ENCODE measurements at regions of chr2 and their contacts with region 1.

Region 1: GRCh38 chr2:218849721-218850120 is 9.9 kb upstream of the WNT6 start:
- DNase-seq: peak in 1 of 2 donors; percentile 41
- H3K4me3 ChIP-seq: no peak overlapping the region
- H3K27ac ChIP-seq: no peak overlapping the region
- H3K4me1 ChIP-seq: no peaks in the 10 kb centered on the region
- H3K27me3 ChIP-seq: no peaks in the 10 kb centered on the region
- CTCF ChIP-seq: no peak

Region 2: DNA sequence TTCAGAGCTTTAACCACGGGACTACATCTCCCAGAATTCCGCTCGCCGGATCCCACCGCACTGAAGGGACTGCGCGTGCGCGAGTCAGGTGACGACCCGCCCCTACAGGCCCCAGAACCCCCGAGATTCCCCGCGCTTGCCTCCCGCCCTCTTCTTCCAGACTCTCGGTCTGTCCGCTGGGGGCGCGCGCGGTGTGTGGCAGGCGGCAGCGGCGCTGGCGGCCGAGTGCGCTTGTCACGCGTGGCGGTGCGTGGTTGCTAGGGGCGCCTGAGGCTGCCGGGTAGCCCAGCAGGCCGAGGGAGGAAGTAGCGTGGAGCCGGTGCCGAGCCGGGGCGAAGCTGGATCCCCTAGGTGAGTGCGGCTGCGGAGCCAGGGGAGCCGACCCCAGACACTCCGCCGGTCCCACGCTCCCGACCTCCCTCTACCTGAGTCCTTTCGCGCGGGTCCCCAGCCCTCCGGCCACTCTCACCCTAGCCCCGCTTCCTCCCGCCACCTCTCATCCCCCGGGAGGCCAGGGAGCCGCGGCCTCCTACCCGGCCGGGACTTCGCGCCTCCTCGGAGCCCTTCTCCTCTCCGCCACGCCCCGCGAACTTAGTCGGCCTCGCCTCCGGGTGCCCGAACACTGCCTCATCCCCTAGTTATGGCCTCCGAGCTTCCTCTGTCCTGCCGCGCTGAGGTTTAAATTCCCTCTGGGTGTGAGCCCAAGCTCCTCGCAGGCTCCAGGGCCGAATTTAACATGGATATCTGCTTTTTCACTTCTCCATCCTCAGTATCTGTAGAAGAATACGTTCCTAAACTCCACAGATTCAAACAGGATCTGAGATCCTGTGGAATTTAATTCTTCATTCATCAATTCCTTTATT is 138.8 kb before region 1 on chr2 and contains the start of gene TTLL4:
- intact Hi-C with region 1: loop called (anchors 1 kb)
- DNase-seq: peak; percentile 93 to 99
- H3K4me3 ChIP-seq: peak within 1 kb of the TSS; percentile 81 to 90
- H3K27ac ChIP-seq: peak within 1 kb of the TSS; percentile 87 to 95
- H3K4me1 ChIP-seq: peaks cover 0 to 7% of the 10 kb centered on the region in 2 donors
- H3K27me3 ChIP-seq: no peaks in the 10 kb centered on the region
- CTCF ChIP-seq: peak; percentile 93 to 98 (median 96)
- total RNA-seq, gene TTLL4: 93.4 TPM

Region 3: GRCh38 chr2:218733171-218734021 is 116.3 kb before region 1 on chr2:
- intact Hi-C with region 1: loop called (anchors 1 kb)
- DNase-seq: peak; percentile 46 to 71
- H3K4me3 ChIP-seq: no peak overlapping the region
- H3K27ac ChIP-seq: no peak overlapping the region
- H3K4me1 ChIP-seq: peaks cover 3 to 9% of the 10 kb centered on the region in 2 donors
- H3K27me3 ChIP-seq: no peaks in the 10 kb centered on the region
- CTCF ChIP-seq: no peak

Region 4: DNA sequence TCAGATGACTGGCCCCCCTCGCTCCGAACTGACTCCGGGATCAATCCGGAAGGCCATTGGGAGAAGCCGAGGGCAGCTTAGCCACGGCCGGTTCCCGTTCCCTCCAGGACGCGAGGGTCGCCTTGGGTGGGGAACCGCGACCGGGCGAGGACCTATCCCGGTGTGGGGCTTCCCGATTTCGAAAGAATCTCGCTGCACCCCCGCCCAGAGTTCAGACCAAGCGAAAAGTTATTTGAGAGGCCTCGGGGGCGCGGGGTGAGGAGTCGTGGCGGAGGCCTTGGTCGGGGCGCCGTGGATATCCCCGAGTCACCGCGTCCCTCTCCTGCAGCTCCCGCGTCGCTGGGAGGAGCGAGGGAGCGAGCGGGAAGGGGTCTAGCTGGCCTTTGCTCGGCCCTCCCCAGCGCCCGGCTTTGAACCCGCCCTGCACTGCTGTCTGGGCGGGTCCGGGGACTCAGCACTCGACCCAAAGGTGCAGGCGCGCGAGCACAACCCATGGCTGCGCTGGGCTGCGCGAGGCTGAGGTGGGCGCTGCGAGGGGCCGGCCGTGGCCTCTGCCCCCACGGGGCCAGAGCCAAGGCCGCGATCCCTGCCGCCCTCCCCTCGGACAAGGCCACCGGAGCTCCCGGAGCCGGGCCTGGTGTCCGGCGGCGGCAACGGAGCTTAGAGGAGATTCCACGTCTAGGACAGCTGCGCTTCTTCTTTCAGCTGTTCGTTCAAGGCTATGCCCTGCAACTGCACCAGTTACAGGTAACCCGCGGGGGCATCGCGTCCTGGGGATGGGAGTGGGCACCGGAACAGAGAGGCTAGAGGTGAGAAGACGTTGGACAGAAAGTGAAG is 67.8 kb before region 1 on chr2 and contains the start of gene CYP27A1:
- intact Hi-C with region 1: loop called (anchors 2 kb)
- DNase-seq: peak in 1 of 2 donors; percentile 73
- H3K4me3 ChIP-seq: peak within 1 kb of the TSS; percentile 79 to 91
- H3K27ac ChIP-seq: peak within 1 kb of the TSS; percentile 88
- H3K4me1 ChIP-seq: peaks cover 0 to 5% of the 10 kb centered on the region in 2 donors
- H3K27me3 ChIP-seq: no peaks in the 10 kb centered on the region
- CTCF ChIP-seq: no peak
- total RNA-seq, gene CYP27A1: 53.1 TPM

Region 5: GRCh38 chr2:218806346-218806978 is 43.3 kb before region 1 on chr2:
- intact Hi-C with region 1: loop called (anchors 5 kb)
- DNase-seq: peak; percentile 75 to 95
- H3K4me3 ChIP-seq: peak overlapping the region; percentile 22 to 31
- H3K27ac ChIP-seq: peak overlapping the region; percentile 68 to 88
- H3K4me1 ChIP-seq: peaks cover 4 to 23% of the 10 kb centered on the region in 2 donors
- H3K27me3 ChIP-seq: no peaks in the 10 kb centered on the region
- CTCF ChIP-seq: no peak

Region 6: DNA sequence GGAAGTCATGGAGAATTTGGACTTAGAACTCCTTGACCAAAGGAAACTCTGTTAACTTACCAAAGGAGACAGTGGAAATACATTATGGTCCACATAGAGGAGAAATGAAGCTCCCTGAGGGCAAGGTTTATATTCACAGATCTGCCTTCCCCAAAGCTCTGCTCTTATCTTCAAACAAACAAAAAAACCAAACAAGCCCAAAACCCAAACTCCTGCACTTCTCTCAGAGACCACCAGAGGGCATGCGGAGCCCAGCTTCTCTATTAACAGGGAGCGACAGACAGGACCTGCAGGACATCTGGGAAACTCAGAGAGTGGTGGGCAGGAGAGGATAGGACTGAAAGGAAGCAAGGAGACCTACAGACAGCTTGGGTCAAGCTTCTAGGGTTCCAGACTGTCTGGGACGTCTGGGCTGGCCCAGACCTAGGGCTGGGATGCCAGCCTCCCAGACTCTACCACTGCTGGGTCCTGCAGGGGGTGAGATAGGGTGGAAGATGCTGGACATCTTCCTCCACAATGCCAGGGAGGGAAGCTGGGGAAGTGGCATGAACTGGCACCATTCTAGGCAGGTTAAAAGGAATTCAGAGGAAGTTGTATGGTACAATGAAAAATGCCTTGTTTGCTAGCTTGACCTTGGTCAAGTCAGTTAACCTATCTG is 27.0 kb after region 1 on chr2:
- intact Hi-C with region 1: no loop called
- DNase-seq: peak in 1 of 2 donors; percentile 78
- H3K4me3 ChIP-seq: no peak overlapping the region
- H3K27ac ChIP-seq: no peak overlapping the region
- H3K4me1 ChIP-seq: peaks cover 0 to 12% of the 10 kb centered on the region in 2 donors
- H3K27me3 ChIP-seq: peaks cover 31% of the 10 kb centered on the region
- CTCF ChIP-seq: peak; percentile 88 to 97 (median 92)

Measured in ascending aorta (tissue), 2 donors.